A549 (cell line): ENCODE measurements at regions of chr11 and their contacts with region 1.

Region 1: DNA sequence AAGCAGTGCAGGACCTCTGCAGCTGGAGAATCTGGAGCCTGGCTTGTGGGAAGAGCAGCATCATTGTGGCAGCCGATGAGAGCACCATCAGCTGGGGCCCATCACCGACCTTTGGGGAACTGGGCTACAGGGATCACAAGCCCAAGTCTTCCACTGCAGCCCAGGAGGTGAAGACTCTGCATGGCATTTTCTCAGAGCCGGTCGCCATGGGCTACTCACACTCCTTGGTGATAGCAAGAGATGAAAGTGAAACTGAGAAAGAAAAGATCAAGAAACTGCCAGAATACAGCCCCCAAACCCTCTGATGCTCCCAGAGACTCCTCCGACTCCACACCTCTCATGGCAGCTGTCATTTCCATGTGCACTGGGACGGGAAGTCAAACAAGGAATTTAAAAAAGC is 35.6 kb downstream of the ASRGL1 start:
- DNase-seq: no peak
- ATAC-seq: no peak
- H3K4me3 ChIP-seq: no peak overlapping the region
- H3K27ac ChIP-seq: no peak overlapping the region
- H3K4me1 ChIP-seq: peaks cover 13% of the 10 kb centered on the region
- CTCF ChIP-seq: no peak
- EP300 ChIP-seq: no peak
- POLR2A ChIP-seq: no peak
- RAD21 ChIP-seq: no peak

Region 2: DNA sequence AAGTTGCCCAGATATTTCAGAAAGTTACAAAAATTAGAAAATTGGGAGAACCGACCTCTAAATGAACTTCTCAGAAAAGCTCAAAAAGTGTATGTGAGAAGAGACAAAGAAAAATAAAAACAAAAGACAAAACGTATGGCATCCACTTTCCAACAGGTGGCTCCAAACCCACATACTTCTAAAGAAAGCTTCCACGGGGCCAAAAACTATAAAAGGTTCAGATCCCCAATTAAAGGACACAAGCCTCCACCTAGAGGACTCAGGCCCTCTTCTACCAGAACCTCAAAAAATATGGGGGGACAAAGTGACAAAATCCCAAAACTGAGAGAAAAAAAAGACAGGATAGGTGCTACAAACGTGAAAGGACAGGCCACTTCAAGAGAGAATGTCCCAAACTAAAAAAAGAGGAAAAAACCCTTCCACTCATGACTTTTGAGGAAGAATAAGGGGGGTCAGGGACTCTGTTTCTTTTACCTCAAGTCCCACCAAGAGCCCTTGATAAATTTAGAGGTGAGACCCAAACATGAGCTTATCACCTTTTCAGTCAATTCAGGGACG is 155.6 kb before region 1 on chr11:
- CTCF ChIA-PET with region 1: interaction called, 10 read pairs
- POLR2A ChIA-PET with region 1: no interaction called
- DNase-seq: peak in 1 of 2 experiments; percentile 46
- ATAC-seq: peak; percentile 24 to 56; a peak in 2 of 6 replicates
- H3K4me3 ChIP-seq: no peak overlapping the region
- H3K27ac ChIP-seq: no peak overlapping the region
- H3K4me1 ChIP-seq: no peaks in the 10 kb centered on the region
- CTCF ChIP-seq: peak; percentile 76
- EP300 ChIP-seq: no peak
- POLR2A ChIP-seq: no peak
- RAD21 ChIP-seq: peak; percentile 82 to 84

Region 3: GRCh38 chr11:62337303-62338181 is 35.3 kb before region 1 on chr11 and contains the start of gene ASRGL1:
- CTCF ChIA-PET with region 1: interaction called, 15 read pairs
- POLR2A ChIA-PET with region 1: no interaction called
- DNase-seq: peak; percentile 82 to 87
- ATAC-seq: peak; percentile 89 to 95
- H3K4me3 ChIP-seq: peak within 1 kb of the TSS; percentile 79
- H3K27ac ChIP-seq: peak within 1 kb of the TSS; percentile 76 to 88
- H3K4me1 ChIP-seq: no peaks in the 10 kb centered on the region
- CTCF ChIP-seq: no peak
- EP300 ChIP-seq: no peak
- POLR2A ChIP-seq: peak; percentile 50
- RAD21 ChIP-seq: no peak
- polyA plus RNA-seq, gene ASRGL1: 13.6 and 19.5 TPM in 2 replicates

Region 4: DNA sequence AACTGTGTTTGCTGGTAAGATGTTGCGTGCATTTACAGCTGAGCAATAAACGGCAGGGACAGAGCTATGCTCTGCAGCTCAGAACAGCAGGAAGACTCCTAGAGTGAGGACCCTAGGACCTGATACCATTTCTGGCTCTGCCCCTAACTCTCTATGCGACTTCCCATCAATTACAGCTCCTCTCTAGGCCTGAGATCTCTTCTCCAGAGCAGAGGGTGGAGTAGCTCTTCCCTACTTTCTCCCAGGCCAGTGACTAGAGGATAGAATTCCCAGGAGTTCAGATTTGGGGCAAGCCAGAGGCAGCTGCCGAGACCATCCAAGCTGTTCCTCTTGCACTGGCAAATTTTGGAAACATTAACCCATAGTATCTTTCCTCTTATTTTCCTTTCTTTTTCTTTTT is 33.2 kb after region 1 on chr11:
- CTCF ChIA-PET with region 1: no interaction called
- POLR2A ChIA-PET with region 1: no interaction called
- DNase-seq: no peak
- ATAC-seq: no peak
- H3K4me3 ChIP-seq: no peak overlapping the region
- H3K27ac ChIP-seq: no peak overlapping the region
- H3K4me1 ChIP-seq: peaks cover 4% of the 10 kb centered on the region; the same call in 2 of the 3 replicates
- CTCF ChIP-seq: no peak
- EP300 ChIP-seq: no peak
- POLR2A ChIP-seq: no peak
- RAD21 ChIP-seq: no peak